ENCODE measurements at regions of chr4 and their contacts with region 1.

Region 1: DNA sequence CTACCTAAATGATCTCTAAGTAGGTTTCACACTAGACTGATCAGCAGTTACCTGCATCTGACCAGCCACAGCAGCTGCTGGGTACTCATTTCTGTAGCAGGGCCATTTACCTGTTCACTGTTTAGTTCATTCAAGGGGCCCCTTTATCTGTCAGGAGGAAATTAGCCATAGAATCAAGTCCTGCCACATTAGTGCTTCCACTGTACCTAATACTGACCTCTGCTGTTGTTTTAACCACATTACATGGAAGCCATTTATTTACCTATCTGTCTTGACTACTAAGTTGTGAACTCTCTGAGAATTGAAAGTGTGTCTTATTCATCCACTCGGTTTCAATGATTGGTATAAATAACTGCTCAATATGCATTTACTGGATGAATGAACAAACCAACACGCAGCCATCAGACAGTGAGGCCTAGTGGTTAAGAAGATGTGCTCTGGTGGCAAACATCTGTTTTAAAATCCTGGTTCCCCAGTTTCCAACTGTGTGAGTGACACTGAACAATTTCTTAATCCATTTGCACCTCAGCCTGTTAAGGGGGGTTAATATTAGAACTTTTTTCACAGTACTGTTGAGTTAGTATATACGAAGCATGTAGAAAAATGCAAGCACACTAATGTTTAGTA is 30.0 kb upstream of the ANXA5 start:
- DNase-seq: peak; percentile 78
- ATAC-seq: peak; percentile 52
- H3K4me3 ChIP-seq: no peak overlapping the region
- H3K27ac ChIP-seq: 0 out of 2 replicates have a peak overlapping the region, but pooled peaks have one; percentile 13
- H3K4me1 ChIP-seq: peaks cover 7% of the 10 kb centered on the region
- H3K27me3 ChIP-seq: no peaks in the 10 kb centered on the region
- CTCF ChIP-seq: peak; percentile 78
- POLR2A ChIP-seq: no peak
- RAD21 ChIP-seq: peak; percentile 80

Region 2: GRCh38 chr4:121484633-121485032 is 242.1 kb before region 1 on chr4:
- CTCF ChIA-PET with region 1: no interaction called
- POLR2A ChIA-PET with region 1: no interaction called
- dilution Hi-C with region 1: no loop called
- in situ Hi-C with region 1: no loop called
- intact Hi-C with region 1: loop called (anchors 2 kb)
- DNase-seq: peak; percentile 66
- ATAC-seq: peak; percentile 100
- H3K4me3 ChIP-seq: no peak overlapping the region
- H3K27ac ChIP-seq: no peak overlapping the region
- H3K4me1 ChIP-seq: no peaks in the 10 kb centered on the region
- H3K27me3 ChIP-seq: peaks cover 2% of the 10 kb centered on the region; the same call in 1 of the 2 replicates
- CTCF ChIP-seq: peak; percentile 79
- POLR2A ChIP-seq: no peak
- RAD21 ChIP-seq: peak; percentile 75

Region 3: DNA sequence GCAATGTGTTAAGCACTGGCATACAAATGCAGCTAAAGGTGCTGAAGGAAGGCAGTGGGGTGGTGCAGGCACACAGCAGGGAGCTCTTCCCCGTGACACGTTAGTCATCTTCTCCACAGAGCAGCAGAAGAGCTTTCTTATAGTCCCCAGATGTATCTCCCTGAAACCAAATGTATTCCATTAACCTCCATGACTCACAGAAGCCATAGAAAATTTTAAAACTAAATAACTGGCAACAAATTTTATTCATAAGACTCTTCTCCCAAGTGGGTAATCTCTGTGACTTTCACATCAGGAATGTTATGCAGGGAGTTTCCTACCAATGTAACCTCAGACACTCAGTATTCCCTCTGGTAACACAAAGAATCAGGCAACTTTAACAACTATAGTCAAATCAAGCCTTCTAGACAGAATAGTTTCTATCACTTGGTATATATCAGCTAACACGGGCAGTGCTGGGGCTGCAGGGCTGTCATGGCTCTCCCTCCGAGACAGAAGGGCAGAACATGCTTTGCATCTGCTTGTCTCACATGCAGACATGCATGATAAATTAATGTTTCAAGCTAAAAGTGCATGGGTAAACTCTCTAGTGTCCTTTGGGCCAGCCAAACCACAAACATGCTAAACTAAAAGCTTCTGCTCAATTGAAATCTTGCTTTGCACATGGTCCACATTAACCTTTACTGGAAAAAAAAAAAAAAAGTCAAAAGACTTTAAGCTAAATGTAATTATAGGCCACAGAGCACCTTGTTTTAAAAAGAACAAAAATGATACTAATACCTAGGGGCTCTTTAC is 58.2 kb before region 1 on chr4:
- CTCF ChIA-PET with region 1: no interaction called
- POLR2A ChIA-PET with region 1: no interaction called
- dilution Hi-C with region 1: no loop called
- in situ Hi-C with region 1: no loop called
- intact Hi-C with region 1: loop called (anchors 2 kb)
- DNase-seq: peak; percentile 99
- ATAC-seq: peak; percentile 83
- H3K4me3 ChIP-seq: no peak overlapping the region
- H3K27ac ChIP-seq: peak overlapping the region; percentile 93
- H3K4me1 ChIP-seq: peaks cover 14% of the 10 kb centered on the region
- H3K27me3 ChIP-seq: no peaks in the 10 kb centered on the region
- CTCF ChIP-seq: no peak
- POLR2A ChIP-seq: no peak
- RAD21 ChIP-seq: no peak

Region 4: DNA sequence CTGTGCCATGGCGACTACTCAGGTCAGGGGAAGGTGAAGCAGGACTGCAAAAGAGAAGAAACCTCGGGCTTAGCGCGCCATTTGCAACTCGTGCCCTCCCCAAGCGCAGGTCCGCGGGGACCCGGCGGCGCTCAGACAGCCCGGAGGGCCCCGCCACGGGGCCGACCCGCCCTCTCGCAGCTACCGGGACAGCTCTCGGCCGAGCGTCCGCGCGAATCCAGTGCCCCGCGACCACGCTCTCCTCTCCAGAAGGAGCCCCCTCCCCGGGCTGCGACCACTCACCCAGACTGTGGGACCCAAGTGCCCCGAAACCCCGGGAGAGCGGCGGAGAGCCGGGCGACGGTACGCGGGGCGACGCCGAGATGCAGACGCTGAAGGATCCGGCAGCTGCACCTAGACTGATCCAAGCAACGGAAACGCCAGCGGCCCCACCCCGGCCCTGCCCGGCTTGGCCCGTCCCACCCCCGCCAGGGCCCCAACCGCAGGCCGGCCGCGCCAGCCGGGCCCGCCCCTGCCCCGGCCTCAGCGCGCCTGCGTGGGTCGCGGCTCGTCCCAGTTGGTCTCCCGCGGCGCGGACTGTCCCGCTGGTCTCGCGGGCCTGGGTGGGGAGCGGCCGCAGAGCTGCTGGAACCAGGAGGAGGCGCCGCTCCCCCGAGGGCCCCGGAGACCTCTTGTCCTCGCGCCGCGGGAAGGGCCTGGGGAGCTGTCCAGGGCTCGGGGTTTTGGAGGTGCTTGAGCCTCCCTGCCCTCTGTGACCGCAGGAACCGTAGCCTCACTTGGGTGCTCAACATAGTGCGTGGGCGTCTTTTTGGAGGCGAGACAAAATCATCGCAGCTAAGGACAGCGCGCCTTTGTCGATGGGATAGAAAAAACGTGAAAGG is 29.9 kb before region 1 on chr4 and contains the start of gene ANXA5:
- CTCF ChIA-PET with region 1: no interaction called
- POLR2A ChIA-PET with region 1: no interaction called
- dilution Hi-C with region 1: no loop called
- in situ Hi-C with region 1: no loop called
- intact Hi-C with region 1: loop called (anchors 1 kb)
- DNase-seq: peak; percentile 88
- ATAC-seq: peak; percentile 94
- H3K4me3 ChIP-seq: peak within 1 kb of the TSS; percentile 99
- H3K27ac ChIP-seq: peak within 1 kb of the TSS; percentile 99
- H3K4me1 ChIP-seq: peaks cover 8% of the 10 kb centered on the region
- H3K27me3 ChIP-seq: no peaks in the 10 kb centered on the region
- CTCF ChIP-seq: peak; percentile 61
- POLR2A ChIP-seq: peak; percentile 96
- RAD21 ChIP-seq: peak; percentile 67
- total RNA-seq, gene ANXA5: 780 and 1,163 TPM in 2 replicates

Region 5: DNA sequence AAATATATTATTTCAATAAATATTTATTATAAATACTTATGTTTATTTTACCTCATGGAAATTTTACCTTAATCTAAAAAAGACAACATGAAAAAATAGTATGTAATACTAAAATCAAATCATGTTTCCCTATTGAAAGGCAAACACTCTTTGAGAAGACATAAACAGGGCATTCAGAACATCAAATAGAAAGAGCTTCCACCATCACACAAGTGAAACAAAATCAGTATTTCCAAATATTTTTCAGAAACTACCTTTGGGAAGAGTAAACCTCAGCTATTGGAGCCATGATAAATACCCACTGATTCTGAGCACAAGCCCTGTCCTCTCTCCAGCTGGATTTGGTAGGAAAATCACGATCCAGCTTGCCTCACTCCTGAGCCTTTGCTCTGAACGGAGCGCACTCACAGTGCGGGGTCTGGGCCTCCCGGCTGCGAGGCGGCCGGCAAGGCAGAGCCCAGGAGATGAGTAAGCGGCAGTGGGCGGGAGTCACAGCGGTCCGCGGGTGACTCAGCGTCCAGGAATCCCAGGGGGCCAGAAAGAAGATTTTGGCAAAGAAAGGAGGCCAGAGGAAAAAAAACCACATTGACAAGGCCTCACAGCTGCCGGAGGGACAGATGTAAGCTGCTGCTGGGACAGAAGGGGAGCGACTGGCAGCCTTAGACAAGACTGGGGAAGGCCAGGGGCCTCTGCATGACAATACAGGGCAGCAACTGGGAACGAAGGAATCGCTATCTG is 15.3 kb before region 1 on chr4:
- CTCF ChIA-PET with region 1: no interaction called
- POLR2A ChIA-PET with region 1: no interaction called
- dilution Hi-C with region 1: no loop called
- in situ Hi-C with region 1: no loop called
- intact Hi-C with region 1: loop called (anchors 2 kb)
- DNase-seq: peak; percentile 97
- ATAC-seq: peak; percentile 99
- H3K4me3 ChIP-seq: peak overlapping the region; percentile 23; the same call in 1 of the 2 replicates
- H3K27ac ChIP-seq: peak overlapping the region; percentile 84
- H3K4me1 ChIP-seq: peaks cover 7% of the 10 kb centered on the region
- H3K27me3 ChIP-seq: no peaks in the 10 kb centered on the region
- CTCF ChIP-seq: no peak
- POLR2A ChIP-seq: peak; percentile 93
- RAD21 ChIP-seq: peak; percentile 19; the same call in 1 of the 2 replicates

Region 6: GRCh38 chr4:121791481-121791880 is 64.7 kb after region 1 on chr4:
- CTCF ChIA-PET with region 1: no interaction called
- POLR2A ChIA-PET with region 1: no interaction called
- dilution Hi-C with region 1: no loop called
- in situ Hi-C with region 1: no loop called
- intact Hi-C with region 1: no loop called
- DNase-seq: peak; percentile 88
- ATAC-seq: peak; percentile 47
- H3K4me3 ChIP-seq: no peak overlapping the region
- H3K27ac ChIP-seq: no peak overlapping the region
- H3K4me1 ChIP-seq: peaks cover 28% of the 10 kb centered on the region
- H3K27me3 ChIP-seq: no peaks in the 10 kb centered on the region
- CTCF ChIP-seq: no peak
- POLR2A ChIP-seq: no peak
- RAD21 ChIP-seq: no peak